Sciatic nerve (tissue), 2 donors: ENCODE measurements at regions of chr19 and their contacts with region 1.

Region 1: DNA sequence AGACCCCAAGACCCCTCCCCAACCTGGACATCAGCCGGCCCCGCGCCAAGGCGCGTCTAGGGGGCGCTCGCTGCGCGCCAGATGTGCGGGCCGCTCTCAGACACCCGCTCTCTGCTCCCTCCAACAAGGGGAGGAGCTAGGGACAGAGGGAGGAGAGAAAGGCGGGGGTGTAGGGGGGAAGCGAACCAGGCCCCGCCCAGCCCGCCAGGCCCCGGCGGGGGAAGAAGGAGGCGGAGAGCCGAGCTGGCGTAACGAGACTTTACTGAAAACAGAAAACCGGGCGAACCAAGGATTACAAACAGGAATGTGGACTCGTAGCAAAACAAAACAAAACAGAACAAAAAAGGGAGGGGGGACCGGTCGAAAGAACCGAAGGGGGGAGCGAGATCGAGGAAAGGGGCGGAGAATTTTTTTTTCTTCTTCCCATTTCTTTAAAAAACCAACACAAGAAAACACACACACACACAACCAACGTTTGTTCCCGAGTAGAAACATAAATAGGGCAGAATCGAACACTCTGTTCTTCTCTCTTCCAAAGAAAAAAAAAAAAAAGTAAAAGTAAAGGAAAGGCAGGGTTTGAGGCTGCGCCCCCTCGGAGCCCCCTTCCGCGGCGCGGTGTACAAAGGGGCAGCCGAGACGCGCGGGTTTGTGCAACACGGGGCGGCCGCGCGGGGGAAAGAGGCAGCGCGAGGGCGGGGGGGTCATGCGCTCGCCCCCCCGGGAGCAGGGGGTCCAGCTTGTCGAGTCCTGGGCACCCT is 1.7 kb downstream of the JUND start:
- DNase-seq: peak; percentile 94
- ATAC-seq: peak; percentile 83

Region 2: DNA sequence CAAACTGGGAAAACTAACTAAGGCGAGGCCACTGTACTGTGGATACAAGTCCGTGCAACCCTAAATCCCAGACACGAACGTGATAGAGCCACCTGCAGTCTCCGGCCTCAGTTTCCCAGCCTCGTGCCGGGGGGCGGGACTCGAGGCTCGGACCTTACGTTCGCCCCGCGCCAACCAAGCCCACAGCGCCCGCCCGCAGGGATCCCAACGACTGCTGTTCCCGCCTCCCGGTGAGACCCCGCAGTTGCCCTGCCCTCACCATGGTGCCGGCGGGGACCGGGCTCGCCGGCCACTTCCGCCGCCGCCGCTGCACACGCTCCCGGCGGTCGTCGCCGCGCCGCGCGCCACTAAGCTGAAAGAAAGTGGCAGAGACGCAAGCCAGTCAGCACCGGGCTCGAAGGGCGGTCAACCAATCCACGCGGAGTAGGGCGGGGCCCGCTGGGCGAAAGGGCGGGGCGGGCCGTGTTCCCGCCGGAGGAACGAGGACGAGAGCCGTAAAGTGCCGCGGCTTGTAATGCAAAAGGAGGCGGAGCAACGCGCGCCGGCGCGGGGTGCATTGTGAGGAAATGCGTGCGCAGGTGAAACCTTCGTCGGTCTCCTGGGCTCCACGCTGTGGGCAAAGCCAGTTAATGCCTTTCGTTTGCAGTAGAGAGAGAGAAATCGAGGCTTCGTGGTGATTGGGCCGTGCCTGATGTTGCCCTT is 43.2 kb after region 1 on chr19 and contains the start of gene LSM4:
- intact Hi-C with region 1: loop called (anchors 5 kb)
- DNase-seq: peak; percentile 99
- ATAC-seq: peak; percentile 98
- total RNA-seq, gene LSM4: 45.7 TPM